Activated CD8-positive, alpha-beta T cell treated with anti-CD3 and anti-CD28 coated beads for 36 hours (primary cell): ENCODE measurements at regions of chr1 and their contacts with region 1.

Region 1: GRCh38 chr1:101309334-101310311 is 72.8 kb downstream of the S1PR1 start:
- DNase-seq: peak; percentile 72
- ATAC-seq: peak; percentile 66
- H3K4me3 Mint-ChIP-seq: peak overlapping the region; percentile 71
- H3K27ac Mint-ChIP-seq: peak overlapping the region; percentile 86
- H3K4me1 Mint-ChIP-seq: peaks cover 69% of the 10 kb centered on the region
- H3K27me3 Mint-ChIP-seq: no peaks in the 10 kb centered on the region
- CTCF ChIP-seq: peak; percentile 89

Region 2: GRCh38 chr1:101112051-101112780 is 197.4 kb before region 1 on chr1:
- CTCF ChIA-PET with region 1: no interaction called
- POLR2A ChIA-PET with region 1: no interaction called
- intact Hi-C with region 1: no loop called
- DNase-seq: peak; percentile 82
- ATAC-seq: peak; percentile 88
- H3K4me3 Mint-ChIP-seq: peak overlapping the region; percentile 40
- H3K27ac Mint-ChIP-seq: peak overlapping the region; percentile 98
- H3K4me1 Mint-ChIP-seq: peaks cover 59% of the 10 kb centered on the region
- H3K27me3 Mint-ChIP-seq: no peaks in the 10 kb centered on the region
- CTCF ChIP-seq: no peak

Region 3: GRCh38 chr1:101262630-101263348 is 46.8 kb before region 1 on chr1:
- CTCF ChIA-PET with region 1: interaction called, 11 read pairs
- POLR2A ChIA-PET with region 1: no interaction called
- intact Hi-C with region 1: no loop called
- DNase-seq: peak; percentile 30
- ATAC-seq: peak; percentile 31
- H3K4me3 Mint-ChIP-seq: peak overlapping the region; percentile 54
- H3K27ac Mint-ChIP-seq: peak overlapping the region; percentile 82
- H3K4me1 Mint-ChIP-seq: peaks cover 74% of the 10 kb centered on the region
- H3K27me3 Mint-ChIP-seq: no peaks in the 10 kb centered on the region
- CTCF ChIP-seq: no peak

Region 4: GRCh38 chr1:101330427-101331130 is 21.0 kb after region 1 on chr1:
- CTCF ChIA-PET with region 1: interaction called, 11 read pairs
- POLR2A ChIA-PET with region 1: no interaction called
- intact Hi-C with region 1: no loop called
- DNase-seq: no peak
- ATAC-seq: no peak
- H3K4me3 Mint-ChIP-seq: no peak overlapping the region
- H3K27ac Mint-ChIP-seq: no peak overlapping the region
- H3K4me1 Mint-ChIP-seq: peaks cover 18% of the 10 kb centered on the region
- H3K27me3 Mint-ChIP-seq: peaks cover 2% of the 10 kb centered on the region
- CTCF ChIP-seq: no peak

Region 5: DNA sequence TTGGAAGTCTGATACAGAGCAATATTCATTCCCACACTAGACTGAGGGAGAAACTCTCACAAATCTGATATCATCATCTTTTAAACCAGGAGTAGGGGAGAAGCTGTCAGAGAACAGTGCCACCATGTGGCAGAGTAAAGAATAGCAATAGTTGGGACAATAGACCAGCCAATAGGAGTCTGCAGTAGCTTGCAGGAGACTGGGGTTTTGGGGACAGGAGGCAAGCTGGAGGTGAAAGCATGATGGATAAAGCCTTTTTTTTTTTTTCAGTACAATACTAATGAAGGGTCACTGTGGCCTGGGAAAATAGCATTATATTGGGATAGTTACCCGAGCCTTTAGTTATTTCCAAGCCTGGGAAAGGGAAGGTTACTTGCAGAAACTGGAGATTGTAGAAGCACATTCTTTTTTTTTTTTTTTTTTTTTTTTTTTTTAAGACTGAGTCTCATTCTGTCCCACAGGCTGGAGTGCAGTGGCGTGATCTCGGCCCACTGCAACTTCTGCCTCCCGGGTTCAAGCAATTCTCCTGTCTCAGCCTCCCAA is 47.9 kb after region 1 on chr1:
- CTCF ChIA-PET with region 1: interaction called, 153 read pairs
- POLR2A ChIA-PET with region 1: interaction called, 3 read pairs
- intact Hi-C with region 1: loop called (anchors 1 kb)
- DNase-seq: peak; percentile 72
- ATAC-seq: peak; percentile 99
- H3K4me3 Mint-ChIP-seq: no peak overlapping the region
- H3K27ac Mint-ChIP-seq: no peak overlapping the region
- H3K4me1 Mint-ChIP-seq: peaks cover 10% of the 10 kb centered on the region
- H3K27me3 Mint-ChIP-seq: no peaks in the 10 kb centered on the region
- CTCF ChIP-seq: peak; percentile 92

Region 6: GRCh38 chr1:101420406-101420805 is 110.8 kb after region 1 on chr1:
- CTCF ChIA-PET with region 1: no interaction called
- POLR2A ChIA-PET with region 1: no interaction called
- intact Hi-C with region 1: no loop called
- DNase-seq: no peak
- ATAC-seq: no peak
- H3K4me3 Mint-ChIP-seq: no peak overlapping the region
- H3K27ac Mint-ChIP-seq: no peak overlapping the region
- H3K4me1 Mint-ChIP-seq: no peaks in the 10 kb centered on the region
- H3K27me3 Mint-ChIP-seq: no peaks in the 10 kb centered on the region
- CTCF ChIP-seq: no peak

Region 7: DNA sequence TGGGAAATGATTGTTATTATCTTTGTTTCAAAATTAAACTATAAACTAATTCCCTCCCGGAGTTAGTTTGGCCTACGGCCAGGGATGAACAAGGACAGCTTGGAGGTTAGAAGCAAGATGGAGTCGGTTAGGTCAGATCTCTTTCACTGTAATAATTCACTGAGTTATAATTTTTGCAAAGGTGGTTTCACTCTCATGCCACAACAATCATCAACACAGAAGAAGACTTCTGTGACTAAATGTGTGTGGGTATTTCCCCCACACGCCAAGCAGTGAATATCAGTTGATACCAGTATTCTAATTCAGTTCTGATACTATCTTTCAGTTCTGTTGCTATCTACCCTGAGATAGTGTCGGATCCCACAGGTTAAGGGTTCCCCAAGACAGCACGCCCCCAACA is 142.3 kb after region 1 on chr1:
- CTCF ChIA-PET with region 1: interaction called, 32 read pairs
- POLR2A ChIA-PET with region 1: no interaction called
- intact Hi-C with region 1: loop called (anchors 5 kb)
- DNase-seq: peak; percentile 59
- ATAC-seq: peak; percentile 93
- H3K4me3 Mint-ChIP-seq: no peak overlapping the region
- H3K27ac Mint-ChIP-seq: peak overlapping the region; percentile 66
- H3K4me1 Mint-ChIP-seq: peaks cover 35% of the 10 kb centered on the region
- H3K27me3 Mint-ChIP-seq: peaks cover 13% of the 10 kb centered on the region
- CTCF ChIP-seq: no peak

Region 8: DNA sequence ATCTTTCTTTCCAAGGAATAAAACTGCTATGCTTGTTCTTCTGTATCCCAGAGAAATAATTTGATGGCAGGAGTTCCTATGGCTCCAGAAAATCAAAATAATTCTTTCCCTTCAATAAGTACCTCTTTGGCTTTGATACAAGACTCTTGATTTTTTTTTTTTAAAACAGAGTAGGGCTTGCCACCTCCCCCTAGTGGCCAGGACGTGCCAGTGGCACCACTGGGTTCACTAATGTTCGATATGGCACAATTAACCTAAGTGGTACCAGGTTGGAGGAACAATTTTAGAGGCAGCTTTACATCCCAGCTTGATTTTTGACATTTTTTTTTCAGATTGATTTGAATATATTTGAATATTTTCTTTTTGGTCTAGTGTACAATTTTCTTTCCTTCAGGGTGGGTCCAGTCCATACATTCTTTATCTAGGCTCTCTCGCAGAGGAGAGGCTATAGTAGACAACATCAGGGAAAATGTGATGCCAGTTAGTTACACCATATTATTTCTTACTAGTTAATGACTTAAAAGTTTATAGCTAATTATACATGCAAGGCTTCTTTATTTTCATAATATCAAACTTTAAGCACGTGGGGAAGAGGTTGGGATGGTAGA is 258.1 kb after region 1 on chr1:
- CTCF ChIA-PET with region 1: interaction called, 12 read pairs
- POLR2A ChIA-PET with region 1: no interaction called
- intact Hi-C with region 1: no loop called
- DNase-seq: peak; percentile 61
- ATAC-seq: peak; percentile 91
- H3K4me3 Mint-ChIP-seq: no peak overlapping the region
- H3K27ac Mint-ChIP-seq: no peak overlapping the region
- H3K4me1 Mint-ChIP-seq: no peaks in the 10 kb centered on the region
- H3K27me3 Mint-ChIP-seq: peaks cover 9% of the 10 kb centered on the region
- CTCF ChIP-seq: peak; percentile 97